ENCODE measurements at regions of chr1 and their contacts with region 1.

Region 1: DNA sequence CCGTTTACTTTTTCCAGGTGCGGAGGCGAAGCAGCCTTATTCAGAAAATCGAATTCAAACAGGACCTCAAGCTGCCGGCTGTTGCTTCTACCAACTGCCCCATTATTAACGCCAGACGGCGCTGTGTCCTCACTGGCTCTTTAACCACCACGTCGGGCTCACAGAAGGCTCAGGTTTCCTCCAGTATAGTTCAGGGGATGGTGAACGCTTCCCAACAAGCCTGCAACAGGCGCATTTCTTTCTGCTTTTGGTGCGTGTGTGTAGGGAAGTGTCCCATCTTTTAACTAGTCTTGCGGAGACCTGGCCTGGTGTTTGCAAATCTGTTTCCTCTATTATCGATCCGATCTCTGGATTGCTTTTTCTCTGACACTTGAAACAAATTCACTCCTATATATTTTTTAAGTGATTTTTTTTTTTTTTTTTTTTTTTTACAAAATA is 791 bp upstream of the STUM start:
- DNase-seq: peak; percentile 17
- ATAC-seq: peak; percentile 92
- H3K4me3 ChIP-seq: no peak overlapping the region
- H3K27ac ChIP-seq: no peak overlapping the region
- H3K4me1 ChIP-seq: peaks cover 9% of the 10 kb centered on the region
- H3K27me3 ChIP-seq: peaks cover 10 to 11% of the 10 kb centered on the region in 2 experiments; a peak in 3 of 4 replicates
- CTCF ChIP-seq: peak; percentile 90 to 97 (median 93)
- EP300 ChIP-seq: no peak
- POLR2A ChIP-seq: no peak
- RAD21 ChIP-seq: peak; percentile 87

Region 2: DNA sequence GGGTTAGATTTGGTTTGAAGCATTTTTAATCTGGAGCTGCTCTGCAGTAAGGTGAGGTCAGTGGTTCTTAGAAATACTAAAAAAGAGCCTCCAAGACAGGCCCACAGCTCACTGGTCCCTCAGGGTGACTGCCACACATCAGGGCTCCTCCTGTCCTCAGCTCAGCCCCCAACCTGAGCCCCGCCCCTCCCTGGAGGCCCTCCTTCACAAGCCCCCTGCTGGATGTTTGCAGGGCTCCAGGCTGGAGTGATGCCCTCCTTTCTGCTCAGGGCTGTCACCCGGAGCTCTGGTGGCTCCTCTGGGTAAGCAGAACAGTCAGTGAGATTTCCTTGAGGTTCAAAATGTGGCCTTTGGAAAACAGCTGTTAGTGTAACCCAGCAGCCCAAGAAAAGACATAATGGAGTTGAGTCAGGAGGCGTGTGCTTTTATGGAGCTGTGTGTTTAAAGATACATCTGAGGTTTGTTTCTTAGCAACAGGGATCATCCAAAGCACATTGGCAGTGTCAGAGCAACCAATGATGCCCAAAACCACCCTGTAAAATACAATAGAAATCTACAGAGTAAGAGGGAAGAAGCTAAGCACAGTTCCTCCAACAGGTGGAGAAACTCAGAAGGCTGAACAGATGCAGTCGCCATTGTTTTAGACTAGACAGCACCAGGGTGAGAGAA is 22.2 kb after region 1 on chr1:
- CTCF ChIA-PET with region 1: interaction called, 13 read pairs
- POLR2A ChIA-PET with region 1: no interaction called
- RAD21 ChIA-PET with region 1: no interaction called
- SMC1A ChIA-PET with region 1: interaction called, 4 read pairs
- in situ Hi-C with region 1: no loop called
- intact Hi-C with region 1: no loop called
- DNase-seq: no peak
- ATAC-seq: peak; percentile 94
- H3K4me3 ChIP-seq: no peak overlapping the region
- H3K27ac ChIP-seq: no peak overlapping the region
- H3K4me1 ChIP-seq: no peaks in the 10 kb centered on the region
- H3K27me3 ChIP-seq: peaks cover 3 to 4% of the 10 kb centered on the region in 2 experiments; a peak in 2 of 4 replicates
- CTCF ChIP-seq: peak in 2 of 3 experiments; percentile 32 to 33; a peak in 3 of 6 replicates
- EP300 ChIP-seq: no peak
- POLR2A ChIP-seq: no peak
- RAD21 ChIP-seq: no peak

Region 3: DNA sequence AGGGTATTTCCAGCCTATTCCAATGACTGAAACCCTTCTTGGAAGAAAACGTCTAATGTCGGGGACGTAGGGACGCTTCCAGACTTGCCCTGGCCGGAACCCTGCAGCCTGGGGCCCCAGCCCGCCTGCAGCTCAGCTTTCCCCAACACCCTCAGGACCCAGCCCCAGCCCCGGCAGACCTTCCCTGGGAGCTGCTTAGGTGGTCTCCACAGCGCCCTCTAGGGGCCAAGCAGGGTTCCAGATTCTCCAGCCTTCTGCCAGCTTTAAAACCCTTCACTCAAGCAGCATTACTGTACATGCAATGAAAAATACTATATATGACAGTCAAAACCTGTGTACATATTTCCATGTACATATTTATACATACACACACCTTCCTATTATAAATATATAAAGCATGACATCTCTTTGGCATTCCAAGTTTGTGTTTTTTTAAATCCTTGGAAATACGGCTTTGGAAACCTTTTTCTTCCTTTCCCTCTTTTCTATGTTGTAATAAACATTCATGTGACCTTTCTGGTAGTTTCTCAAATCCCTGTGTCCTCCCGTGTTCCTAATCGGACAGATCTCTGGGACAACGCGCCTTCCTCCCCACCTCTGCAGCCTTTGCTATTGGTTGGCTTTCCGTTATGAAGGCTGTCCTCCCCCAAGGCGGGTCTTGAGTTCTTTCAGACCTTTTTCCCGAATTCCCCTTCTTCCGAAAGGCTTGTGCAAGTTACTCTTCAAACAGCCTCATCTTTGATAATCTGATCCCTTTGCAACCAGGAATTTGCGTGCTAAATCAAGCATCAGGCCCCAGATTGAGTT is 61.1 kb after region 1 on chr1:
- CTCF ChIA-PET with region 1: interaction called, 13 read pairs
- POLR2A ChIA-PET with region 1: no interaction called
- RAD21 ChIA-PET with region 1: interaction called, 11 read pairs
- SMC1A ChIA-PET with region 1: interaction called, 3 read pairs
- in situ Hi-C with region 1: no loop called
- intact Hi-C with region 1: loop called (anchors 5 kb)
- DNase-seq: no peak
- ATAC-seq: peak; percentile 96
- H3K4me3 ChIP-seq: no peak overlapping the region
- H3K27ac ChIP-seq: no peak overlapping the region
- H3K4me1 ChIP-seq: no peaks in the 10 kb centered on the region
- H3K27me3 ChIP-seq: peaks cover 0 to 1% of the 10 kb centered on the region in 2 experiments; a peak in 3 of 4 replicates
- CTCF ChIP-seq: peak; percentile 71 to 88 (median 84)
- EP300 ChIP-seq: no peak
- POLR2A ChIP-seq: no peak
- RAD21 ChIP-seq: peak; percentile 66

Region 4: DNA sequence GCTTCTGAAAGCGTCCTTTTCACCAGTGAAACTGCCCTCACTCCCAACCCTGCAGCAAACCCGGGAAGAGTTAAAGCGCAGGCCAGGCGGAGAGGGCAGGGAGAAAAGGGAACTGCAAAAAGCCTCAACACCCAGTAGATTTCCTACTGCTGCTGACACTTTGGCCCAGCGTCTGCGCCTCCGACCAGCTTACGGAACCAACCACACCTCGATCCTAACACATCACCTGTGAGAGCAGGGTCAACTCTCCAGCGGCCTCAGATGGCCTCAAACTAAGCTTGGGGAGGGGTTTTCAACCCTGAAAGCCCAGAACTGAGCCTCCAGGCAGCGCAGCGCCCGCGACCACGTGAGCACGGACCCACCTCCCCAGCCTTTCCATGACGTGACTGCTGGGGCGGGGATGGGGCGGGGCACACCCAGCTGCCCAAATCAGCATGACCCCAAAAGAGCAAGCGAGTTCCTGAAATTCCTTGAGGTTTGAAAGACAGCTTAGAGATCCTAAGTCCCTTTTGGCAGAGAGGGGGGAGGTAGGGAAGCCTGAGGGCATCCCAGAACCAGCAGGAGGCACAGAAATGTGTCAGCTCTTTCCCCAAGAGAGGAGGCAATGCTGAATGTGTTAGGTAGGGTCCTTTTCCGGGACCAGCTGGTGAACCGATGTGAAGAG is 132.2 kb after region 1 on chr1:
- CTCF ChIA-PET with region 1: no interaction called
- POLR2A ChIA-PET with region 1: no interaction called
- RAD21 ChIA-PET with region 1: no interaction called
- SMC1A ChIA-PET with region 1: no interaction called
- in situ Hi-C with region 1: no loop called
- intact Hi-C with region 1: no loop called
- DNase-seq: no peak
- ATAC-seq: peak; percentile 68
- H3K4me3 ChIP-seq: peak overlapping the region; percentile 57; the same call in 1 of the 2 replicates
- H3K27ac ChIP-seq: peak overlapping the region; percentile 51
- H3K4me1 ChIP-seq: peaks cover 63% of the 10 kb centered on the region
- H3K27me3 ChIP-seq: no peaks in the 10 kb centered on the region
- CTCF ChIP-seq: no peak
- EP300 ChIP-seq: no peak
- POLR2A ChIP-seq: peak; percentile 47; the same call in 1 of the 2 replicates
- RAD21 ChIP-seq: no peak

Region 5: GRCh38 chr1:226702957-226703831 is 155.4 kb after region 1 on chr1:
- CTCF ChIA-PET with region 1: no interaction called
- POLR2A ChIA-PET with region 1: no interaction called
- RAD21 ChIA-PET with region 1: no interaction called
- SMC1A ChIA-PET with region 1: no interaction called
- in situ Hi-C with region 1: no loop called
- intact Hi-C with region 1: no loop called
- DNase-seq: no peak
- ATAC-seq: peak; percentile 92
- H3K4me3 ChIP-seq: peak overlapping the region; percentile 54
- H3K27ac ChIP-seq: peak overlapping the region; percentile 92
- H3K4me1 ChIP-seq: peaks cover 12% of the 10 kb centered on the region
- H3K27me3 ChIP-seq: no peaks in the 10 kb centered on the region
- CTCF ChIP-seq: no peak
- EP300 ChIP-seq: peak in 1 of 2 experiments; percentile 41; a peak in 1 of 4 replicates
- POLR2A ChIP-seq: peak; percentile 93
- RAD21 ChIP-seq: no peak

Measured in GM12878 (cell line).